WTC11 (cell line): ENCODE measurements at regions of chr11 and their contacts with region 1.

Region 1: DNA sequence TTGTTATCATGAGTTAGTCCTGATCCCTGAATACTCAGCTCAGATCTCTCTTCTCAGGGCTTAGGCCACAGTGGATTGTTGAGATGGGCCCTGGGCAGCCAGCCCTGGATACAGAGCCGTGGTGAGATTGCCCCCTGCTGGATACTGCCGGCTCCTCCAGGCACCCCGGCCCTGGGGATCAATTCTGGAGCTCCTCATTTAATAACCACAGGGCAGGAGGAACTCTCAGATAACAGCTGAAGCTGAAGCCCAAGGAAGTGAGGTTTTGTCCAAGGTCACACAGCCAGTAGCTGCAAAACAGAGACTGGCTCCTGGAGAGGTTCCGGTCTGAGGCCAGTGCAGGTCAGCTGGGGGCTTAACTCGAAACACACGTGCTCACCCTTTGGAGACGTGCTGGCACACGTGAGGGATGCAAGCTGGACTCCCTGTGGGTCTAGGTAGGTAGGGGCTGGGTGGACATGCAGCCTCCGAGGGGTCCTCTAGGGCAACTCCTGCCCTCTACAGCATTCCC is 16.0 kb downstream of the USH1C start:
- DNase-seq: peak; percentile 82
- ATAC-seq: peak; percentile 95
- H3K4me3 Mint-ChIP-seq: no peak overlapping the region
- H3K27ac Mint-ChIP-seq: no peak overlapping the region
- H3K4me1 Mint-ChIP-seq: peaks cover 5% of the 10 kb centered on the region; the same call in 1 of the 2 replicates
- H3K27me3 Mint-ChIP-seq: no peaks in the 10 kb centered on the region; the same call in 1 of the 2 replicates
- CTCF ChIP-seq: peak; percentile 73

Region 2: DNA sequence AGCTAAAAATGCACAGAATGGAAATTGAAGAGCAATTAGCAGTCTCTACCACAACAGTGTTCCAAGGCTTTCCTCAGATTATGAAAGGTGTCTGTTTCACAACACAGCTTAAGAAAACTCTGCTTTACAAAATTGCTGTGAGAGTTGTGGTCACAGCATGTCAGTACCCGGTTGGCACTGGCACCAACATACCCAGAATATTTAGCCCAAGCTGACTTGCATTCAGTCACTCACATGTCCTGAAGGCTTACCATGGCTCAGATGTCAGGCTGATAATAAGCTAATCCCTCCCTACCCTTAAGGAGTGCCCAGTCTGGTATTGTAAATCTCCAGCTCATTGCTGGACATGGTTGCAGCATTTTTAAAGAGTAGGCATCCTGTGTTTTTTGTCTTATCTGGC is 161.7 kb before region 1 on chr11:
- CTCF ChIA-PET with region 1: interaction called, 13 read pairs
- POLR2A ChIA-PET with region 1: no interaction called
- DNase-seq: no peak
- ATAC-seq: no peak
- H3K4me3 Mint-ChIP-seq: no peak overlapping the region
- H3K27ac Mint-ChIP-seq: no peak overlapping the region
- H3K4me1 Mint-ChIP-seq: no peaks in the 10 kb centered on the region
- H3K27me3 Mint-ChIP-seq: peaks cover 23% of the 10 kb centered on the region
- CTCF ChIP-seq: no peak

Region 3: GRCh38 chr11:17421781-17422180 is 106.5 kb before region 1 on chr11:
- CTCF ChIA-PET with region 1: interaction called, 11 read pairs
- POLR2A ChIA-PET with region 1: no interaction called
- DNase-seq: no peak
- ATAC-seq: no peak; the same call in 1 of the 2 replicates
- H3K4me3 Mint-ChIP-seq: no peak overlapping the region
- H3K27ac Mint-ChIP-seq: no peak overlapping the region
- H3K4me1 Mint-ChIP-seq: peaks cover 19% of the 10 kb centered on the region
- H3K27me3 Mint-ChIP-seq: no peaks in the 10 kb centered on the region; the same call in 1 of the 2 replicates
- CTCF ChIP-seq: no peak

Region 4: GRCh38 chr11:17479284-17480214 is 48.7 kb before region 1 on chr11:
- CTCF ChIA-PET with region 1: interaction called, 28 read pairs
- POLR2A ChIA-PET with region 1: no interaction called
- DNase-seq: peak; percentile 74
- ATAC-seq: peak; percentile 71
- H3K4me3 Mint-ChIP-seq: no peak overlapping the region
- H3K27ac Mint-ChIP-seq: no peak overlapping the region
- H3K4me1 Mint-ChIP-seq: peaks cover 19% of the 10 kb centered on the region
- H3K27me3 Mint-ChIP-seq: peaks cover 52% of the 10 kb centered on the region
- CTCF ChIP-seq: no peak

Region 5: GRCh38 chr11:17538731-17539130 is 10.5 kb after region 1 on chr11:
- CTCF ChIA-PET with region 1: interaction called, 67 read pairs
- POLR2A ChIA-PET with region 1: no interaction called
- DNase-seq: no peak
- ATAC-seq: peak; percentile 50
- H3K4me3 Mint-ChIP-seq: no peak overlapping the region
- H3K27ac Mint-ChIP-seq: no peak overlapping the region
- H3K4me1 Mint-ChIP-seq: peaks cover 33% of the 10 kb centered on the region
- H3K27me3 Mint-ChIP-seq: peaks cover 11% of the 10 kb centered on the region
- CTCF ChIP-seq: no peak

Region 6: DNA sequence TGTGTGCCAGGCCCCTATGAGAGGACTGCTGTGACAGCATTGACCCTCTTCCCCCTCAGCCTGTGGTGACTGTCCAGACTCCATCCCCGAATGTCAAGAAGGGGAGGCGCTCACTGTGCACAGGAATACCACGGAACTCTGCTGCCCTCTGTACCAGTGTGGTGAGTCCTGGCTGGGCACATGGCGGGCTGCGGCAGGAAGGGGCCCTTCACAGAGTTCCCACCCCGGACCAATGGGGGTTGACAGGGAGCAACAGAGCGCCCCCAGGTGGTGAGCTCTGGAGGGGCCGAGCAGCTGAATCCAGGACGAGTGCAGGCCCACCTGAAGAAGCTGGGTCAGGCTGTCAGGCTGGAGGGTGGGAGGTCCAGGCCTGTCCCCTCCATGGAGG is 107.3 kb after region 1 on chr11:
- CTCF ChIA-PET with region 1: interaction called, 11 read pairs
- POLR2A ChIA-PET with region 1: no interaction called
- DNase-seq: peak; percentile 54
- ATAC-seq: peak; percentile 46
- H3K4me3 Mint-ChIP-seq: no peak overlapping the region
- H3K27ac Mint-ChIP-seq: no peak overlapping the region
- H3K4me1 Mint-ChIP-seq: no peaks in the 10 kb centered on the region
- H3K27me3 Mint-ChIP-seq: no peaks in the 10 kb centered on the region; the same call in 1 of the 2 replicates
- CTCF ChIP-seq: peak; percentile 54